Head of caudate nucleus (tissue), 42 donors: ENCODE measurements at regions of chr1 and their contacts with region 1.

Region 1: GRCh38 chr1:59971464-59971911 is 44.9 kb upstream of the CYP2J2 start:
- DNase-seq: peak; percentile 49 to 91 (median 81)

Region 2: GRCh38 chr1:61851849-61852669 is 1880.6 kb after region 1 on chr1:
- intact Hi-C with region 1: loop called (anchors 10 kb)
- DNase-seq: peak in 11 of 42 donors; percentile 19 to 65 (median 31)